CD4-positive, alpha-beta T cell (primary cell): ENCODE measurements at regions of chr19 and their contacts with region 1.

Region 1: DNA sequence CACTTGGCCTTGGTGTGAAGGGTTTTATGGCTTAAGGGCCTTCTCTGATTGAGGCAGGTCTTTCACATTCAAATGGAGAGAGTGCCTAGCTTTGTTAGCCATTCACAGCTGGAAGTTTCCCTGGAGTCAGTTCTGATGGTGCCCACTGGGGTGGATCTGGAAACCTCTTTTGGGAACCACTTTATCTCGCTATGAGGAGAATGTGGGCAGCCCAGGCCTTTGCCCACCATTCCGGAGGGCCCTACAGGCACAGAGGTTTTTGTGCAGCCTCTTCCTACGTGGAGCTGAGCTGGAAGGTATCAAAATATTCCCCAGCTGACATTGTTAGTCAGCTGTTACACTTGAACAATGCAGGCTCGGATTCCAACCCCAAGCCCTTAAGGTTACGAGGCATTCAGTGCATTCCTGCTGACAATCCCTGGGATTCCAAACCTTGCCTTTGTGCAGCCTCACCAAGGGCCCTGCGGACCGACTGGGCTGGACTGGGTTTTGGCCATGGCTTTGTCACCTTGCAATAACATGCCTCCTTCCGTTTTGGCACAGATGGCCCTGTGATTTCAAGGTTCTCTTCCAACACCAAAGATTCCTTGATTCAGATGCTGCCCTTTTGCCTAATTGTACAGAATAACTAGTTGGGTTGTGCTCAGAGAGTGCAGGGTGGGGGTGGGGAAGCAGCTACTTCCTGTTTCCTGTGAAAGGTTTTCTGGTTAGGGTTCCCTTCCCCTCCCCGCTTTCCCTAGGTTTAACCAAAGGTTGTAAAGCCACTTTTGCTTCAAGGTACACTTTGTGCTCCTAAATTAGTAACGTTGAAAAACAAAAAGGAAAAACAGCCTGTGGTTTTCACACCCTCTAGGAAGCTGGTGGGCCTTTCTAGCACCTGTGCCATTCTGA is 27.0 kb downstream of the SAE1 start:
- DNase-seq: peak in 12 of 14 experiments; percentile 21 to 84 (median 42)
- ATAC-seq: peak; percentile 15
- H3K4me3 ChIP-seq: peak overlapping the region; percentile 31
- H3K4me3 Mint-ChIP-seq: peak overlapping the region; percentile 81
- H3K27ac ChIP-seq: peak overlapping the region; percentile 42 to 64
- H3K27ac Mint-ChIP-seq: peak overlapping the region; percentile 85
- H3K4me1 ChIP-seq: peaks cover 73% of the 10 kb centered on the region
- H3K4me1 Mint-ChIP-seq: peaks cover 71% of the 10 kb centered on the region
- H3K27me3 ChIP-seq: no peaks in the 10 kb centered on the region
- H3K27me3 Mint-ChIP-seq: no peaks in the 10 kb centered on the region
- CTCF ChIP-seq: no peak

Region 2: DNA sequence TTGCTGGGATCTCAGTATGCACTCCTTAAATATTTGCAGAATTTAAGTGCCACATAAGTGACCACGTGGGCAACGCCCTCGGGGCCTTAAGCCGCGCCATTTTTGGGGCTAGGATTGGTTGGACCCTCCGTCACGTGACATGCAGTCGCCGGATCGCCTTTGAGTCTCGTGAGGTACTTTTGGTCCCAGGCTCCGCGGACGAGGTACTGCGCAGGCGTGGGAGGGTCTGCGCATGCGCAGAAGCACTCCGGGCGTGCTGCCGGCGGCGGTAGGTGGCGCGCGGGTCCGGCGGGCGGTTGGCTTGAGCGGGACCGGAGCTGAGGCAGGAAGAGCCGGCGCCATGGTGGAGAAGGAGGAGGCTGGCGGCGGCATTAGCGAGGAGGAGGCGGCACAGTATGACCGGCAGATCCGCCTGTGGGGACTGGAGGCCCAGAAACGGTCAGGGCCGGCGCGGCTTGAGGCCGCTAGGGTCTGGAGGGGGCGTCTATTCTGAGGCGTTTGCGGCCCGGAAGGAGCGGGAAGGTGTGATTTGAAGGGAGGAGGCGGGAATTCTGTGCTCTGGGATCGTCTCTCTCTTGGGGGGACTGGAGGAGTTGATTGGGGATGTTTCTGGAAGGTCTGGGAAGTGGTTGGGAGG is 27.0 kb before region 1 on chr19 and contains the start of gene SAE1:
- CTCF ChIA-PET with region 1: interaction called, 11 read pairs
- POLR2A ChIA-PET with region 1: interaction called, 7 read pairs
- intact Hi-C with region 1: no loop called
- DNase-seq: peak; percentile 82 to 98 (median 92)
- ATAC-seq: peak; percentile 91
- H3K4me3 ChIP-seq: peak within 1 kb of the TSS; percentile 95
- H3K4me3 Mint-ChIP-seq: peak within 1 kb of the TSS; percentile 96
- H3K27ac ChIP-seq: peak within 1 kb of the TSS; percentile 68 to 74
- H3K27ac Mint-ChIP-seq: peak within 1 kb of the TSS; percentile 83
- H3K4me1 ChIP-seq: peaks cover 44% of the 10 kb centered on the region
- H3K4me1 Mint-ChIP-seq: peaks cover 52% of the 10 kb centered on the region
- H3K27me3 ChIP-seq: no peaks in the 10 kb centered on the region
- H3K27me3 Mint-ChIP-seq: no peaks in the 10 kb centered on the region
- CTCF ChIP-seq: peak; percentile 73
- total RNA-seq, gene SAE1: 29.6 to 30.9 TPM

Region 3: DNA sequence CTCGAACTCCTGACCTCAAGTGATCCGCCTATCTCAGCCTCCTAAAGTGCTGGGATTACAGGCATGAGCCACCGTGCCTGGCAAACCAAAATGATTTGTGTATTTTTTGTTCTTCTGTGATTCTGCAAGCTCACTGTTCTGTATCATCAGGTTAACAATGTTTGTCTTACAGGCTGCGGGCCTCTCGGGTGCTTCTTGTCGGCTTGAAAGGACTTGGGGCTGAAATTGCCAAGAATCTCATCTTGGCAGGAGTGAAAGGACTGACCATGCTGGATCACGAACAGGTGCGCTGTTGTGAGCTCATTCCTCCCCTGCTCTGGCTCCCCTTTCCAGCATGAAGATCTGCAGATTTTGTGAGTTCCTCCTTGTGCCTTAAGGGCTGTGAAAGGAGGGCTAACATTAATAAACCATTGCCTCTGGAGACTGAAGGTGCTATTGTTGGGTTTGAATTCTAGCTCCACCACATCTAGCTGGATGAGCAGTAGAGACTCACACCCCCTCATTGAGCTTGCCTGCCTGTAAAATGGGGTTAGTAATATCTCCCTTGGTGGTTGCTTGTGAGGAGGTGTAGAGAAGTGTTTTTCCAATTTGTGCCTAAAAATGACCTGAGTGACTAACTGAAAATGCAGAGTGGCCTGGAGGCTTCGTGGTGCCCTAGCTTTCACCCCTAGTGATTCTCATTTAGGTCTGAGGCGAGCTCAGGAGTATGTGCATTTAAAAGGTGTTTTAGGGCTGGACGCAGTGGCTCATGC is 14.2 kb before region 1 on chr19:
- CTCF ChIA-PET with region 1: interaction called, 5 read pairs
- POLR2A ChIA-PET with region 1: interaction called, 35 read pairs
- intact Hi-C with region 1: no loop called
- DNase-seq: no peak
- ATAC-seq: no peak
- H3K4me3 ChIP-seq: no peak overlapping the region
- H3K4me3 Mint-ChIP-seq: no peak overlapping the region
- H3K27ac ChIP-seq: no peak overlapping the region
- H3K27ac Mint-ChIP-seq: no peak overlapping the region
- H3K4me1 ChIP-seq: peaks cover 42% of the 10 kb centered on the region
- H3K4me1 Mint-ChIP-seq: peaks cover 56% of the 10 kb centered on the region
- H3K27me3 ChIP-seq: no peaks in the 10 kb centered on the region
- H3K27me3 Mint-ChIP-seq: no peaks in the 10 kb centered on the region
- CTCF ChIP-seq: no peak

Region 4: GRCh38 chr19:47168065-47168464 is 10.4 kb after region 1 on chr19:
- CTCF ChIA-PET with region 1: interaction called, 4 read pairs
- POLR2A ChIA-PET with region 1: interaction called, 28 read pairs
- intact Hi-C with region 1: no loop called
- DNase-seq: no peak
- ATAC-seq: no peak
- H3K4me3 ChIP-seq: no peak overlapping the region
- H3K4me3 Mint-ChIP-seq: no peak overlapping the region
- H3K27ac ChIP-seq: no peak overlapping the region
- H3K27ac Mint-ChIP-seq: no peak overlapping the region
- H3K4me1 ChIP-seq: peaks cover 11% of the 10 kb centered on the region
- H3K4me1 Mint-ChIP-seq: peaks cover 41% of the 10 kb centered on the region
- H3K27me3 ChIP-seq: no peaks in the 10 kb centered on the region
- H3K27me3 Mint-ChIP-seq: no peaks in the 10 kb centered on the region
- CTCF ChIP-seq: no peak

Region 5: GRCh38 chr19:47176627-47177090 is 19.0 kb after region 1 on chr19:
- CTCF ChIA-PET with region 1: interaction called, 8 read pairs
- POLR2A ChIA-PET with region 1: interaction called, 81 read pairs
- intact Hi-C with region 1: loop called (anchors 1 to 2 kb)
- DNase-seq: peak in 11 of 14 experiments; percentile 22 to 82 (median 43)
- ATAC-seq: peak; percentile 85
- H3K4me3 ChIP-seq: peak overlapping the region; percentile 6
- H3K4me3 Mint-ChIP-seq: peak overlapping the region; percentile 81
- H3K27ac ChIP-seq: peak overlapping the region; percentile 60 to 68
- H3K27ac Mint-ChIP-seq: peak overlapping the region; percentile 98
- H3K4me1 ChIP-seq: peaks cover 56% of the 10 kb centered on the region
- H3K4me1 Mint-ChIP-seq: peaks cover 69% of the 10 kb centered on the region
- H3K27me3 ChIP-seq: no peaks in the 10 kb centered on the region
- H3K27me3 Mint-ChIP-seq: no peaks in the 10 kb centered on the region
- CTCF ChIP-seq: no peak